ENCODE measurements at regions of chr22 and their contacts with region 1.

Region 1: DNA sequence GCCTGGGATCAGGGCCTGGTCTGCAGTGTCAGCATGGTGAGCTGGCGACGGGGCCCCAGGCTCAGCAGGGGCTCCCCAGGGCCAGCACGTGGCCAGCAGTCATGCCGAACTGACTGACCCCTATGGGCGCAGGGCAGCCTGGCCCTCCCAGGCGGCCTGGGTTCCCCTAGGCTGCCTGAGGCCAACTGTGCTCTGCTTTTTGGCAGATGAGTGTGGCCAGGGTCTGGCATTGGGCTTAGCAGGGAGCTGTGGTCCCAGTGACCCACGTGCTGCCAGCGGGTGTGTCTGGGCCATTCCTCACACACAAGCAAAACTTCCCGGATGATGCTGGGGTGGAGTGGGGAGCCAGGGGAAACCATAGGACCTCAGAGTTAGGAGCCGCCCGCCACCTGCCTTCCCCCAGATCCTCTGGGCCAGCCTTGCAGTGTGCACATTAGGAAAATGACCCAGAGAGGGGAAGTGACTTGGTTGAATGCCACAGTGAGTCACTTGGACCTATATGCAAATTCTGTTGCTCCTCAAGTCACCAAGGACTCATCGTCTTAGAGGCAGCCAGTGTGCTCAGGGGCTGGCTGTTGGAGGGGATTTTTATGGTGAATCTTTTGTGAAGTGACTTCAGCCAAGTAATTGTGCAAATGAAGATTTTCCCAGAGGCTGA is 6.5 kb downstream of the ADORA2A start:
- DNase-seq: no peak
- ATAC-seq: peak; percentile 75
- H3K4me3 Mint-ChIP-seq: peak overlapping the region; percentile 75
- H3K27ac Mint-ChIP-seq: peak overlapping the region; percentile 98
- H3K4me1 Mint-ChIP-seq: peaks cover 91% of the 10 kb centered on the region
- H3K27me3 Mint-ChIP-seq: no peaks in the 10 kb centered on the region
- CTCF ChIP-seq: no peak

Region 2: GRCh38 chr22:24236656-24237055 is 197.3 kb before region 1 on chr22:
- CTCF ChIA-PET with region 1: no interaction called
- POLR2A ChIA-PET with region 1: no interaction called
- intact Hi-C with region 1: no loop called
- DNase-seq: no peak
- ATAC-seq: no peak
- H3K4me3 Mint-ChIP-seq: no peak overlapping the region
- H3K27ac Mint-ChIP-seq: no peak overlapping the region
- H3K4me1 Mint-ChIP-seq: peaks cover 8% of the 10 kb centered on the region
- H3K27me3 Mint-ChIP-seq: no peaks in the 10 kb centered on the region
- CTCF ChIP-seq: no peak

Region 3: DNA sequence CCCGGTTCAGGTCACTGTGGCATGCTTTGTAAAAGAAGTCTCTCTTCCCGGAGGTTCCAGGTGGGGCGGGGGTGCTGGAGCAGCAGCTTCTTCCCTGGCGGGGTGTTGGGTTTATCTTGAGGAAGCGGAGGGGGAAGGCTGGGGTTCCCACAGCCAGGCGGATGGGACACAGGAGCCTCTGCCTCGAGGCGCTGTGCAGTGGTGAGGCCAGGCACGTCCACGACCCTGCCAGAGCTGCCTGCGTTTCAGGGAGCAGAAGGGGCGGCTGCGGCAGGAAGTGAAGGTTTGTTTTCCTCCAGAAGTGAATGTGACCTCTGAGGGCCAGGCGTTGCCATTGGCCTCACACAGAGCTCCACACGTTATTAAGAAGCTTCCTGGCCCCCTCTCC is 26.7 kb before region 1 on chr22:
- CTCF ChIA-PET with region 1: no interaction called
- POLR2A ChIA-PET with region 1: no interaction called
- intact Hi-C with region 1: no loop called
- DNase-seq: peak; percentile 45
- ATAC-seq: no peak
- H3K4me3 Mint-ChIP-seq: no peak overlapping the region
- H3K27ac Mint-ChIP-seq: peak overlapping the region; percentile 82
- H3K4me1 Mint-ChIP-seq: peaks cover 56% of the 10 kb centered on the region
- H3K27me3 Mint-ChIP-seq: no peaks in the 10 kb centered on the region
- CTCF ChIP-seq: no peak

Region 4: GRCh38 chr22:24445481-24446259 is 11.7 kb after region 1 on chr22:
- CTCF ChIA-PET with region 1: interaction called, 5 read pairs
- POLR2A ChIA-PET with region 1: interaction called, 21 read pairs
- intact Hi-C with region 1: no loop called
- DNase-seq: peak; percentile 79
- ATAC-seq: peak; percentile 98
- H3K4me3 Mint-ChIP-seq: no peak overlapping the region
- H3K27ac Mint-ChIP-seq: peak overlapping the region; percentile 63
- H3K4me1 Mint-ChIP-seq: peaks cover 57% of the 10 kb centered on the region
- H3K27me3 Mint-ChIP-seq: no peaks in the 10 kb centered on the region
- CTCF ChIP-seq: no peak

Region 5: GRCh38 chr22:24486501-24486921 is 52.6 kb after region 1 on chr22:
- CTCF ChIA-PET with region 1: interaction called, 4 read pairs
- POLR2A ChIA-PET with region 1: interaction called, 5 read pairs
- intact Hi-C with region 1: loop called (anchors 5 kb)
- DNase-seq: peak; percentile 40
- ATAC-seq: peak; percentile 92
- H3K4me3 Mint-ChIP-seq: no peak overlapping the region
- H3K27ac Mint-ChIP-seq: no peak overlapping the region
- H3K4me1 Mint-ChIP-seq: peaks cover 17% of the 10 kb centered on the region
- H3K27me3 Mint-ChIP-seq: no peaks in the 10 kb centered on the region
- CTCF ChIP-seq: no peak

Region 6: GRCh38 chr22:24503137-24503842 is 69.3 kb after region 1 on chr22:
- CTCF ChIA-PET with region 1: interaction called, 28 read pairs
- POLR2A ChIA-PET with region 1: no interaction called
- intact Hi-C with region 1: loop called (anchors 5 kb)
- DNase-seq: peak; percentile 84
- ATAC-seq: peak; percentile 93
- H3K4me3 Mint-ChIP-seq: no peak overlapping the region
- H3K27ac Mint-ChIP-seq: no peak overlapping the region
- H3K4me1 Mint-ChIP-seq: peaks cover 11% of the 10 kb centered on the region
- H3K27me3 Mint-ChIP-seq: no peaks in the 10 kb centered on the region
- CTCF ChIP-seq: peak; percentile 75